ENCODE measurements at regions of chr4 and their contacts with region 1.

Region 1: GRCh38 chr4:20773144-20773997 is 73.1 kb downstream of the PACRGL start:
- DNase-seq: peak; percentile 60
- H3K4me3 ChIP-seq: no peak overlapping the region
- H3K27ac ChIP-seq: no peak overlapping the region
- H3K4me1 ChIP-seq: no peaks in the 10 kb centered on the region
- H3K27me3 ChIP-seq: no peaks in the 10 kb centered on the region
- CTCF ChIP-seq: peak; percentile 47 to 69 (median 60)
- POLR2A ChIP-seq: no peak

Region 2: GRCh38 chr4:20512033-20512792 is 261.2 kb before region 1 on chr4:
- intact Hi-C with region 1: no loop called
- DNase-seq: no peak
- H3K4me3 ChIP-seq: no peak overlapping the region
- H3K27ac ChIP-seq: peak overlapping the region in 1 of 2 donors; percentile 19
- H3K4me1 ChIP-seq: no peaks in the 10 kb centered on the region
- H3K27me3 ChIP-seq: no peaks in the 10 kb centered on the region
- CTCF ChIP-seq: no peak
- POLR2A ChIP-seq: no peak

Region 3: DNA sequence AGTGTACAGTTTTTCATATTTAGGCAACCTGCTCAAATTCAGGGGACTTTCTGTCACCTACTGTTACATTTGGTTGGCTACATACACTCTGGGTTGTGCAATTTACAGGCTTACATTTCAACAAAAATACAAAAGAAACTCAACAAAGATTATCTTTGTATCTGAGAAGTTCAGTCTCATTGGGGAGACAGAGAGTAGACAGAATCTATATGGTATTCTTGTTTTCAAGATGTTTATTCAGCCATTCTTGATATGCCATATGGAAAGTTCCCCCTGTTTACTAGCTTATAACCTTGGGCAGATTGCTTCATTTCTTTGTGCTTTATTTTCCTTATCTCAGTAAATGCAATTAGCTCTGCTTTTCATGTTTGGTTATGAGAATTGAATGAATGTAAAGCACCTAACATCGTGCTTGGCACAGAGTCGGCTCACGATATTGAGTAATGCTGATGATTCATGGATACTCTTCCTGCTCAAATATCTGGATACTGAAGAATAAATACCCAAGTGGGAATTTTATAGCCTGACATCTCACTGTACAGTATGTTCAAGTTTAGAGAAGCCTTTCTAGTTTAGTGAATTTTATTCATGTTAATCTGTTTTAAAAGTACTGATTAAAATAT is 169.6 kb before region 1 on chr4:
- intact Hi-C with region 1: no loop called
- DNase-seq: no peak
- H3K4me3 ChIP-seq: no peak overlapping the region
- H3K27ac ChIP-seq: no peak overlapping the region
- H3K4me1 ChIP-seq: no peaks in the 10 kb centered on the region
- H3K27me3 ChIP-seq: no peaks in the 10 kb centered on the region
- CTCF ChIP-seq: no peak
- POLR2A ChIP-seq: no peak

Region 4: DNA sequence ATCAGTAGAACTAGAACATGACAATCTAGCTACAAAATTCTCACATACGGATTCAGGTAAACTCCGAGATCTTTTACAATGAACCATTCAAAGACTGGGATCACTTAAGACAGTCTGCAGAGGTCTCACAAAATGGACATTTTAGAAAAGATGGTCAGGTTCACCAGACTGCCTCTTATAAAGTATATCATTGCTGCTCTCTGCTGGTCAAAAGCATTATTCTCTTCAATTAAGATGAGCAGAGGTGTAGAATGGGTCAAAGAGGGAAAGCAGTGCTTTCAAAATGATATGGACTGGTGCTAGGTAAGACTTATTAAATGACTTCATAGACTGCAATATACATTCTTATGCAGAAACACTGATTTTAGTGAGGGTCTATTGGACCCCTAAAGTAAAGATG is 361.6 kb after region 1 on chr4:
- intact Hi-C with region 1: loop called (anchors 10 kb)
- DNase-seq: no peak
- H3K4me3 ChIP-seq: no peak overlapping the region
- H3K27ac ChIP-seq: no peak overlapping the region
- H3K4me1 ChIP-seq: no peaks in the 10 kb centered on the region
- H3K27me3 ChIP-seq: no peaks in the 10 kb centered on the region
- CTCF ChIP-seq: peak in 3 of 4 experiments; percentile 8 to 31 (median 13)
- POLR2A ChIP-seq: no peak

Region 5: DNA sequence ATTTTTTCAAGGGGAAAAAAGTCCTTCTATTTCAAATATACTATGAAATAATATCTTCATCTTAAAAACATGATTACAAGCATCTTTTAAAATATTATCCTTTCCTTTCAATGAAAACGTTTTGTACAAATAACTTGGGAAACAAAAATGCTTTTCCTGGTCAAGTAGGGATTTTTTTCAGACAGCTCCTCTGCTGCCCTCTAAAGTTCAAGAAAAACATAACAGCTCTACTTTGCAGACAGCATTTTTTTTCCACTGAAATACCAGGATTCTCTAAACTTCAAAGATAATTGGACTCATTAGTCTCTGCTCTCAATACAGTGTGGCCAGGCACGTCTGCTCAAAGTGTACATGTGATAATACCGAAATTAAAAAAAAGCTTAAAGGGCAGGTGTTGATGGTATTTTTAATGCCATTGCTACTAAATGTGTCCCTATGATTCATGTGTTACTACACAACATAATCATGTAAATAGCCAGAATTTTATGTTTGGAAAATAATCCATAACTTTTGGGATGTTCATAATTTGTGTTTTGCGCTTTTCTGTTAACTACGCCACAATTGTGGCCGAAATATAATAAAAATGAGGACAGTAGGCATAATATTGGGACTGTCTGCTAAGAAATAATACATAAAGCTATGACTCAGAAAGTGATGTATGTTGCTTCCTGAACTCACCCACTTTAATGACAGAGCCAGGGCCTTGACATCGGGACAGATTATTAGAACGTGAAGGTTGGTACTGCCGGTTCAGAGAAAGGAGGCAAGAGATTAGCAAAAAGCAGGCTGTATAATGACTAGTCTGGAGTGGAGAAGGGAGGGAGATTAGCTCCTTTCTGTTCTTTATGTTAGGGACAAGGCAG is 696.3 kb after region 1 on chr4:
- intact Hi-C with region 1: loop called (anchors 5 kb)
- DNase-seq: no peak
- H3K4me3 ChIP-seq: no peak overlapping the region
- H3K27ac ChIP-seq: no peak overlapping the region
- H3K4me1 ChIP-seq: no peaks in the 10 kb centered on the region
- H3K27me3 ChIP-seq: no peaks in the 10 kb centered on the region
- CTCF ChIP-seq: peak in 3 of 4 experiments; percentile 40 to 47 (median 45)
- POLR2A ChIP-seq: no peak

Region 6: GRCh38 chr4:21529214-21529613 is 755.8 kb after region 1 on chr4:
- intact Hi-C with region 1: no loop called
- DNase-seq: no peak
- H3K4me3 ChIP-seq: no peak overlapping the region
- H3K27ac ChIP-seq: no peak overlapping the region
- H3K4me1 ChIP-seq: no peaks in the 10 kb centered on the region
- H3K27me3 ChIP-seq: no peaks in the 10 kb centered on the region
- CTCF ChIP-seq: no peak
- POLR2A ChIP-seq: no peak

Region 7: DNA sequence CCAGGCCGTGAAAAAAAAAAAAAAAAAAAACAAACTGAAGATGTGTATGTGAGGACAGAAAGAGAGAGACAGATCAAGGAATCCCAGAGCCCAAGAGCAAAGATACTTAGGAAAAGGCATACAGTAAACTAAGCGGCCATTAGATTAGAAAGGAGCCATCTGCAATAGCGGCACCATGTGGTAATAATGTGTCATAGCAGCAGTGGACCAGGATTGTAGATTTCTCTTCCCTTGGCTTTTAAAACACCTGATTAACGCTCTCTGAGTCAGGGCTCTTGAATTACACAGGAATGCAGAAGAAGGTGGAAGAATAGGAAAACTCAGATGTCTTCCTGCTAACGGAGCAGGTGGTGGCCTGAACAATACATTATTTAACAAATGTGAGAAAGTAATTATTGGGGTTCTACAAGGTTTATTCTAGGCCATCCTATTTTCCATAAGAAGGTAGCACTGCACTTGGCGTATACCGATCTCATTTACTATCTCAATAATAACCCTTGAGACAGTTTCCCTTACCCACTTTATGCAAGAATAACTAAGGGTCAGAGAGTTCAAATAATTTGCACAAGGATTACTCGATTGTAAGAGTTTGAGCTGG is 992.5 kb after region 1 on chr4:
- intact Hi-C with region 1: loop called (anchors 10 kb)
- DNase-seq: peak; percentile 7
- H3K4me3 ChIP-seq: no peak overlapping the region
- H3K27ac ChIP-seq: no peak overlapping the region
- H3K4me1 ChIP-seq: no peaks in the 10 kb centered on the region
- H3K27me3 ChIP-seq: no peaks in the 10 kb centered on the region
- CTCF ChIP-seq: peak; percentile 34 to 62 (median 50)
- POLR2A ChIP-seq: no peak